ENCODE measurements at regions of chr19 and their contacts with region 1.

Region 1: DNA sequence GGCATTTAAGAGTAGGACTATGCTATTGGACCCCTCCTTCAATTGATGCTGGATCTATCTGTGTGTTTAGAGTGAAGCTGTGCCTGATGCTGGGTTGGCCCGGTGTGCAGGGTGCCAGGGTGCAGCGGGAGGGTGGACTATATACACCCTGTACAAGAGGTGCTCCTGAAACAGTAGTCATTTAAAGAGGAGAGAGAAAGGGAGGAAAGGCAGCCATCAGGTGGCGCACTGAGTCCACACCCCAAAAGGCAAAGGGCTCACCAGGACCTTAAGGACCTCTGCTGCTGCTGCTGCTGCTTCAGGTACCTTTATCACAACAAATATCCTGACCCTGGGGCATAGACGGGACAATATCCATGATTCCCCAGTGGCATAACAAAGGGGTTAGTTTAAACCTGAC is 39.4 kb downstream of the ZNF136 start:
- DNase-seq: peak in 3 of 5 donors; percentile 24 to 40 (median 32)
- ATAC-seq: peak; percentile 37 to 79 (median 66)
- H3K4me3 ChIP-seq: no peak overlapping the region
- H3K27ac ChIP-seq: no peak overlapping the region
- H3K4me1 ChIP-seq: no peaks in the 10 kb centered on the region
- H3K27me3 ChIP-seq: no peaks in the 10 kb centered on the region
- CTCF ChIP-seq: peak in 10 of 12 donors; percentile 19 to 52 (median 34)
- POLR2A ChIP-seq: no peak

Region 2: GRCh38 chr19:12255372-12255771 is 53.1 kb after region 1 on chr19:
- intact Hi-C with region 1: loop called in 1 of 10 experiments (anchors 2 kb)
- DNase-seq: no peak
- ATAC-seq: no peak
- H3K4me3 ChIP-seq: no peak overlapping the region
- H3K27ac ChIP-seq: no peak overlapping the region
- H3K4me1 ChIP-seq: no peaks in the 10 kb centered on the region
- H3K27me3 ChIP-seq: no peaks in the 10 kb centered on the region
- CTCF ChIP-seq: no peak
- POLR2A ChIP-seq: no peak

Region 3: DNA sequence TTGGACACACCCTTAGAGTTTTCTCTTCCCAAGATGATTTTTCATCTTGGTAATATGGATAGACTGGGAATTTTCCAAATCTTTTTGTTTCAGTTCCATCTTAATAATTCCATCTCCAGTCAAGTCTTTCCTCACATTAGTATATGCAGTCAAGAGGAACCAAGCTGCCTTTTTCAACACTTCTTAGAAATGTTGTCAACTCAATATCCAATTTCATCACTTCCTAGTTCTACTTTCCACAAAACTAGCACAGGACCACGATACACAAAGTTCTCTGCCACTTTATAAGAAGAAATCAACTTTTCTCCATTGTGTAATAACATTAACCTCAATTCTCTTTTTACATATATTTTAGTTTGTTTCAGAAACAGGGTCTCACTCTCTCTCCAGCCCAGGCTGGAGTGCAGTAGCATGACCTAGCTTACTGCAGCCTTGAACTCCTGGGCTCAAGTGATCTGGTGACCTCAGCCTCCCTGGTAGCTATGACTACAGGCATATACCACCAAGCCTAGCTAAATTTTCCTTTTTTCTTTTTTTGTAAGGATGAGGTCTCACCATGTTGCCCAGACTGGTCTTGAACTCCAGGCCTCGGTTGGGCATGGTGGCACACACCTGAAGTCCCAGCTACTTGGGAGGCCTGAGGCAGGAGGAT is 223.1 kb after region 1 on chr19:
- intact Hi-C with region 1: no loop called
- DNase-seq: no peak
- ATAC-seq: no peak
- H3K4me3 ChIP-seq: no peak overlapping the region
- H3K27ac ChIP-seq: no peak overlapping the region
- H3K4me1 ChIP-seq: no peaks in the 10 kb centered on the region
- H3K27me3 ChIP-seq: no peaks in the 10 kb centered on the region
- CTCF ChIP-seq: no peak
- POLR2A ChIP-seq: no peak